OCI-LY7 (cell line): ENCODE measurements at regions of chr19 and their contacts with region 1.

Region 1: GRCh38 chr19:35693830-35694599 is 10.3 kb upstream of the ZBTB32 start:
- DNase-seq: peak; percentile 92
- H3K4me3 ChIP-seq: no peak overlapping the region
- H3K27ac ChIP-seq: no peak overlapping the region
- H3K4me1 ChIP-seq: no peaks in the 10 kb centered on the region
- CTCF ChIP-seq: peak; percentile 99

Region 2: DNA sequence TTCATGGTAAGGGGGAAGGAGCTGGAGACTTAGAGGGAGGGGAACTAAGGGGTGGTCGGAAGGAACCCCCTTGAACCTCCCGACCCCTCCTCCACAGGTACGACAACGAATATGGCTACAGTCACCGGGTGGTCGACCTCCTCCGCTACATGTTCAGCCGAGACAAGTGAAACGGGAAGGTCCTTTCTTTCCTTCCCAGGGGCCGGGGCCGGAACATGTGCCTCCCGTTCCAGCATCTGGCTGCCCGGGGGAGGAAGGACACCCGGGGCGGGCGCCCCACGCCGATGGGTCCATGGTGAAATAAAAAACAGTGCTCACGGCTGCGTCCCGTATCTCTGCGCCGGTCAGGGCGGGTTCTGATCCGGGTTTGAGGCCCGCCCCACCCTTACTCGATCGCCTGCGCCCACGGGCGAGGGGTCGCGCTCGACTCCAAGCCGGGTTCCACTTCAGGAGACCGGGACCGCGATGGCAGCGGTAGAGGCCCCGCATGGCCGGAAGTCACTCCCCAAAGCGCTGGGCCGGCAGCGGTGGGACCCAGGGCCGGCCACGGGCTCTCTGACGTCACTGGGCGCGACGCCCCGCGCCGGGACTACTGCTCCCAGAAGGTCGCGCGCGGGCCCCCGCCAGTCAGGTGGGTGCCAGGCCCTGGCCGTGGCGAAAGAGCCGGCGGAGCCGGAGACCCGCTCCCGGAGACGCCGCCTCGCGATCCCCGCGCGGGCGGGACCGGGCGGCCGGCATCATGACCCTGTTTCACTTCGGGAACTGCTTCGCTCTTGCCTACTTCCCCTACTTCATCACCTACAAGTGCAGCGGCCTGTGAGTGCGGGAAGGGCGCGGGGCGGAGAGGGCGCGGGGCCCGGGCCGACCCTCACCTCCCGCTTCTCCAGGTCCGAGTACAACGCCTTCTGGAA is 148.8 kb before region 1 on chr19 and contains the start of gene TMEM147:
- CTCF ChIA-PET with region 1: no interaction called
- POLR2A ChIA-PET with region 1: no interaction called
- intact Hi-C with region 1: loop called (anchors 5 kb)
- DNase-seq: peak; percentile 92
- H3K4me3 ChIP-seq: peak within 1 kb of the TSS; percentile 80
- H3K27ac ChIP-seq: peak within 1 kb of the TSS; percentile 4
- H3K4me1 ChIP-seq: peaks cover 28% of the 10 kb centered on the region
- CTCF ChIP-seq: no peak
- total RNA-seq, gene TMEM147: 83.2 and 85.8 TPM in 2 replicates

Region 3: DNA sequence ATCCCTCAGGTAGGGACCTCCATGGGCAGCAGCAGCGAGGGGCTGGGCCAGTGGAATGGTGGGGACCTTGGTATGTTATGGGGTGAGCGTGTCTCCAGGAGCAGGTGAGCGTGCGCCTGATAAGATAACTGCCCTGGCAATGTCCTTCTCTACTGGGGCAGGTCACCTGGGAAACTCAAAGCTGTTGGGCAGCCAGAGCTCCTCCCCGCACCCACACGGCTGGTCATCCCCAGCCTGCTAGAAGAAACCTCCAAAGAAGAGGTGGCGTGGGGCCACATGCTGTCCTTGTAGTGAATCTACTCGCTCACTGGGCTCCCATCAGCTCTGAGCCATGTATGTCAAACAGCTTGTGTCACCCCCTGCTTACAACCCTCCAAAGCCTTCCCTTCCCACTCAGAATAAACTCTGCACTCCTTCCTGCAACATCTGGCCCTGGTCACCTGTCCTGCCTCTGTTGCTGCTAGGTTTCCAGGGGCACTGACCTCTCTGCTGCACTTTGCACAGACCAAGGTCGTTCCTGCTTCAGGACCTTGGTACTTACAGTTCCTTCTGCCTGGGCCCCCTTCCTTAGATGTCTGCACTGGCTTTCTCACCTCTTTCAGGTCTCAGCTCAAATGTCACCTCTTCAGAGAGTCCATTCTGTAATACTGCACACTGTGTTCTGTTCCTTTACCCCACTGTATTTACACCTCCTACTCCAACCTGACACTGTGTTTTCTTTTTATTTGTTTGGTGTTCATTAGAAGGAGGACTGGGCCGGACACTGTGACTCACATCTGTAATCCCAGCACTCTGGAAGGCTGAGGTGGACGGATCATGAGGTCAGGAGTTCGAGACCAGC is 128.8 kb before region 1 on chr19:
- CTCF ChIA-PET with region 1: no interaction called
- POLR2A ChIA-PET with region 1: no interaction called
- intact Hi-C with region 1: no loop called
- DNase-seq: no peak
- H3K4me3 ChIP-seq: no peak overlapping the region
- H3K27ac ChIP-seq: no peak overlapping the region
- H3K4me1 ChIP-seq: no peaks in the 10 kb centered on the region
- CTCF ChIP-seq: no peak

Region 4: GRCh38 chr19:35740423-35741202 is 46.6 kb after region 1 on chr19:
- CTCF ChIA-PET with region 1: interaction called, 8 read pairs
- POLR2A ChIA-PET with region 1: no interaction called
- intact Hi-C with region 1: loop called (anchors 1 kb)
- DNase-seq: peak; percentile 97
- H3K4me3 ChIP-seq: peak overlapping the region; percentile 69
- H3K27ac ChIP-seq: peak overlapping the region; percentile 86
- H3K4me1 ChIP-seq: peaks cover 52% of the 10 kb centered on the region
- CTCF ChIP-seq: peak; percentile 61

Region 5: DNA sequence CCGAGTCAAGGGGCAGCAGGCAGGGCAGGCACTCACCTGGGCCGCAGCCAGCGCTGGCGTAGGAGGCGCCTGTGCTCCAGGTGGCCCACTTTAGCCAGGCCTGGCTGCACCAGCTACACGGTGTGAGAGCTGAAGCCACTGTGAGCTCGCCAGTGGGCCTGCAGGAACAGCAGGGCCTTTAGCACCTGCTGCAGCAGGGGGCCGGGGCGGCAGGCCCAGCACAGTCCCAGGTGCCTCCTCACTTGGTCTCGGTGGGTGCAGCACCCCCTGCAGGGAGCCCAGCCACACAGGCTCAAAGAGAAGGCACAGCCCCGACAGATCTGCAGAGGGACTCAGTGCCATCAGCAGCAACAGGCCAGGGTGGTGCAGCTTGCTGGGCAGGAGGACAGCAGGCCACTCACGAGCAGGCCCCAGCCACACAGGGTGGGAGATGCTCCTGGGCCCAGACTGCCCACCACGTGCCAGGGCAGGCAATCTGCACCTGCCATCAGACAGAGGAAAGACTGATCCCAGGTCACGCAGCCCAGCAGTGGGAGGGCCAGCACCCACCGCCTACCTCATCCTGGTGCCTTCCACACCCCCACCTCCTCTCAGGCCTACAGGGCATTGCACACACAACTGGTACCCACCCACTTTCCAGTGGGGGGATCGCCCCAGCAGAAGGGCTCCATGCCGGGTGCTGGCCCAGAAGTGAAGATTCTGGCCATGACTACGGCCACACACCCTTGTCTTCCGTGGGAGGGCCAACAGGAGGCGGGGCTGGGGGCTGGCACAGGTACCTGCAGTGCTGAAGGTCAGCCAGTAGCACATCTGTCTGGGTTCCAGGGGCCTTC is 97.2 kb after region 1 on chr19:
- CTCF ChIA-PET with region 1: no interaction called
- POLR2A ChIA-PET with region 1: no interaction called
- intact Hi-C with region 1: loop called (anchors 1 kb)
- DNase-seq: peak; percentile 56
- H3K4me3 ChIP-seq: no peak overlapping the region
- H3K27ac ChIP-seq: no peak overlapping the region
- H3K4me1 ChIP-seq: no peaks in the 10 kb centered on the region
- CTCF ChIP-seq: peak; percentile 66; the same call in 1 of the 2 replicates

Region 6: GRCh38 chr19:35931161-35931873 is 237.3 kb after region 1 on chr19:
- CTCF ChIA-PET with region 1: no interaction called
- POLR2A ChIA-PET with region 1: interaction called, 3 read pairs
- intact Hi-C with region 1: loop called (anchors 1 kb)
- DNase-seq: peak; percentile 100
- H3K4me3 ChIP-seq: peak overlapping the region; percentile 67
- H3K27ac ChIP-seq: peak overlapping the region; percentile 61
- H3K4me1 ChIP-seq: peaks cover 12% of the 10 kb centered on the region
- CTCF ChIP-seq: peak; percentile 95